CD4-positive, alpha-beta T cell (primary cell): ENCODE measurements at regions of chr5 and their contacts with region 1.

Region 1: DNA sequence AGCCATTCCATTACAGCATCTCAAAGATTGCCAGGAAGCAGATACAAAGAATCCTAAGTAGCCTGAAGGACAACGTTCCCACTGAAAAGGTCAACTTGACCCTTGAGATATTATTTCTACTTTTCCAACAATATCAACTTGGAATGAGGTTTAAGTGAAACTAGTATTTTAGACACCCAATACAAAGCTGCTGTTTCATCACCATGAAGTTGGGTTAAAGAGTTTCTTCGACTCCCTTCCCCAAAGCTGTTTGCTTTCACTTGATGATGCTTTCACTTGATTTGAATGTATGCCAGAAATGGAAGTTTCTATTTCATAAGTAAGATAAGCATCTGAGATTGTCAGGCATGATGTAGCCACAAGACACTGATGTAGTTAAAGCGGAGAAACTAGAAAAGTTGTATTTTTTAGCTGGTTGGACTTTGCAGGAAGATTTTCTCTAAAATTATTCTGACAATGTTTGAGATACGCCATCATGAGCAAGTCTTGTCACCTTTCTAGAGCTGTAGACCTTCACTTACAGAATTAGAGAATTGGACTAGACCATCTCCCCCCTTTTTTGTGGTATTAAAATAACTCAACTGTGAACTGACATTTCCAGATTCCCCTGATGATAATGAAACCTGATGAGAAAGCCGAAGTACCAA is 20.1 kb downstream of the MOCS2 start:
- DNase-seq: peak in 3 of 14 experiments; percentile 37 to 59 (median 49)
- ATAC-seq: peak; percentile 88
- H3K4me3 ChIP-seq: no peak overlapping the region
- H3K4me3 Mint-ChIP-seq: peak overlapping the region; percentile 5
- H3K27ac ChIP-seq: no peak overlapping the region
- H3K27ac Mint-ChIP-seq: peak overlapping the region; percentile 4
- H3K4me1 ChIP-seq: peaks cover 6% of the 10 kb centered on the region
- H3K4me1 Mint-ChIP-seq: peaks cover 21% of the 10 kb centered on the region
- H3K27me3 ChIP-seq: no peaks in the 10 kb centered on the region
- H3K27me3 Mint-ChIP-seq: no peaks in the 10 kb centered on the region
- CTCF ChIP-seq: no peak

Region 2: DNA sequence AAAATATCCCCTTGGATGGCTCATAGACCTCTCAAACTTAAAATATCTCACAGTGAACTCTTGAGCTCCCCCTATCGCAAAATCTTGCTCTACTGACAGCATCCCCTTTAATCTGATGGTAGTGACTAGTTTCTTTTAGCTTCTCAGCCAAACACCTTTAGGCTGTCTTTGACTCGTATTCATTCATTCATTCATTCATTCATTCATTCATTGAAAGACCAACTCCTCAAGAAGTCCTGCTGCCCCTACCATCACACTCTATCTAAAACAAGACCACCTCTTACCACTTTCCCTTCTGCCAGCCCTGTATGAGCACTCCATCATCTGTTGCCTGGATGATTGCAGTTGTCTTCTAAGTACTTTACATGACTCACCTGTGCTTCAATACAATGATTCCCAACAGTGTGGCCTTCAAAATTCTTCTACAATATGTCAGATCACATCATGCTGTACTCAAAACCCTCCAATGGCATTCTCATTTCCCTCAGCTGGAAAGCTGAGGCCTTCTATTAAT is 53.5 kb before region 1 on chr5:
- CTCF ChIA-PET with region 1: no interaction called
- POLR2A ChIA-PET with region 1: interaction called, 6 read pairs
- intact Hi-C with region 1: loop called in 1 of 2 experiments (anchors 5 kb)
- DNase-seq: peak in 1 of 14 experiments; percentile 5
- ATAC-seq: no peak
- H3K4me3 ChIP-seq: no peak overlapping the region
- H3K4me3 Mint-ChIP-seq: no peak overlapping the region
- H3K27ac ChIP-seq: no peak overlapping the region
- H3K27ac Mint-ChIP-seq: no peak overlapping the region
- H3K4me1 ChIP-seq: peaks cover 12% of the 10 kb centered on the region
- H3K4me1 Mint-ChIP-seq: peaks cover 35% of the 10 kb centered on the region
- H3K27me3 ChIP-seq: no peaks in the 10 kb centered on the region
- H3K27me3 Mint-ChIP-seq: no peaks in the 10 kb centered on the region
- CTCF ChIP-seq: no peak